Esophagus muscularis mucosa (tissue), 4 donors: ENCODE measurements at regions of chr5 and their contacts with region 1.

Region 1: DNA sequence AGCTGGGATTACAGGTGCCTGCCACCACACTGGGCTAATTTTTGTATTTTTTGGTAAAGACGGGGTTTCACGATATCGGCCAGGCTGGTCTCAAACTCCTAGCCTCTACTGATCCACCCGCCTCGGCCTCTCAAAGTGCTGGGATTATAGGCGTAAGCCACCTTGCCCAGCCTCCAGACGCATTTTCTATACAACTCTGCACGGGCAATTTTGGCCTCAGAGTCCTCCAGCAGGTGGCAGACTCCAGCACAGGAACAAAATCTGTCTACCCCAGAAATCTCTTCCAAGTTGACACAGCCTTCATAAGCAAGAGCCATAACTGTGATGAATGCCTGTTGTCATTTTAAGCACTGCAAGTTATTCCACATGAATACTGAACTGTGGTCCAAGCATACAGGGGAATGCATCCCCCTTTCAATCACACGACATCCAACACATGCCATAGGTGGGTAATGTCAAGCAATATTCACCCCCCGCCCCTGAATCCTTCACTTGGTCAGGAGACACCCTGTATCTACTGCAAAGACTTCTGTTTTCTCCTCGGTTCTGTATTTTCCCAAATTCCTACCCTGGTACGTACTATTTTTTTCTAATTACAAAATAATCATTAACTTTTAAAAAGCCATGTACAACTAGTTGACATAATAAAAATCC is 50.8 kb downstream of the ALDH7A1 start:
- DNase-seq: no peak
- H3K4me3 ChIP-seq: no peak overlapping the region
- H3K27ac ChIP-seq: no peak overlapping the region
- H3K4me1 ChIP-seq: peaks cover 0 to 4% (median 1%) of the 10 kb centered on the region in 4 donors
- H3K27me3 ChIP-seq: no peaks in the 10 kb centered on the region
- CTCF ChIP-seq: peak in 2 of 3 experiments; percentile 15 to 52
- EP300 ChIP-seq: no peak
- POLR2A ChIP-seq: no peak

Region 2: GRCh38 chr5:126594676-126595485 is 50.7 kb after region 1 on chr5 and contains the start of gene ALDH7A1:
- intact Hi-C with region 1: loop called (anchors 5 kb)
- DNase-seq: peak; percentile 96
- H3K4me3 ChIP-seq: peak within 1 kb of the TSS; percentile 61 to 75 (median 68)
- H3K27ac ChIP-seq: peak within 1 kb of the TSS; percentile 76 to 83 (median 80)
- H3K4me1 ChIP-seq: peaks cover 9 to 32% (median 20%) of the 10 kb centered on the region in 4 donors
- H3K27me3 ChIP-seq: no peaks in the 10 kb centered on the region
- CTCF ChIP-seq: peak; percentile 32 to 56 (median 43)
- EP300 ChIP-seq: no peak
- POLR2A ChIP-seq: no peak
- total RNA-seq, gene ALDH7A1: 14.9 to 17.7 (median 15.5) TPM

Region 3: DNA sequence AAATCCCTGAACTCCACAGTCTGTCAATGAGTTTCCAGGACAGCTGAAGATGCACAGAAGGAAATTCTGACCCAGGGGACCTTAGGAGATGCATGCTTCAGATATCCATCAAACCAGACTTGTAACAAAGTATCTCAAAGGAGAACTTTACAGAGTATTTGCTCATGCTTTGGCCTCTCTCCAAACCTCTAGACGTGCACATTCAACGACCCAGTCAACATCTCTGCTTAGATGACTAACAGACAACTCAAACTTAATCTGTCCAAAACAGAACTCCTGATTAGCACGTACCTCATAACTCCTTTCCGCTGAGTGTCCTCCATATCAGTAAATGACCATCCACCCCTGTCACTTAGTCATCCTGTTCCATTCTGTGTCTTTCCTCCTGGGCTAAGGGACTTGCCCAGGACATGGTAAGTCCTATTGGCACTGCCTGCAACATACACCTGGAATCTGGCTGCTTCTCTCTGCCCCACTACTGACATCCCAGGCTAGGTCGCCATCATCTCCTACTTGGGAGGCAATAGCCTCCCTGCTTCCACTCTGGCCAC is 340.1 kb after region 1 on chr5:
- intact Hi-C with region 1: no loop called
- DNase-seq: no peak
- H3K4me3 ChIP-seq: no peak overlapping the region
- H3K27ac ChIP-seq: no peak overlapping the region
- H3K4me1 ChIP-seq: no peaks in the 10 kb centered on the region
- H3K27me3 ChIP-seq: peaks cover 0 to 8% (median 0%) of the 10 kb centered on the region in 4 donors
- CTCF ChIP-seq: no peak
- EP300 ChIP-seq: no peak
- POLR2A ChIP-seq: no peak